HCT116 (cell line): ENCODE measurements at regions of chr11 and their contacts with region 1.

Region 1: DNA sequence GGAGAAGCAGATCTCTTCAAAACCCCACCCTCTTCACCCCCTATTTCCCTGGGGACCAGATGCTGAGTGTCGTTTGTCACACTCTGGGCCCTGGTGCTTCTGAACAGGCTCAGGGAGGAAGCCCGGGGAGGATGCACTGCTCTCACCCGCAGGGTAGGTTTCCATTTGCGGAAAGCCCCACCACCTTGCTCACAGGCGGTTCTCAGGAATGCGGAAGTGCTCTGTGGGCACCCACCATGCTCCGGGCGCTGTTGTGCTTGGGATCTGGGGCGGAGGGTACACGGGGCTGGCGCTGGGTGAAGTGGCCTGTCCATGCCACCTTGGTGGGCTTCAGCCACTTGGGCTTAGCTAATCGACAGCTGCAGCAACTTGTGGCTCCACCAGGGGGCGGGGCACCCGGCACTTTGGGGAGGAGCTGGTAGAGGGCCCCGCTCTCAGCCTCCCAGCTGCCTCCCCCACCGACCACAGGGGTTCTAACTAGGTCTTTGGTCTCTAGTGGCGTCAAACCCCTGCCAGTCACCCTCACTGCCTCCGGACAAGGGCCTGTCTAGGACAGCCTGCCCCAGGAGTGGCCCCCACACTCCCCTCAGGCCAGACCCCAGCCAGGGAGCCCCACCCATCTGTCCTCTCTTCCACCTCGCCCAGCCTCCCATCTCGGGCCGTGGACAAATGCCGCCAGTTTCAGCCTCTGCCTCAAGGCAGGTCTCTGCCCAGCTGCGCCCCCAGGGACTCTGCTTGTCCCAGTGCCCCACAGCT is 7.4 kb downstream of the NDUFV1 start:
- DNase-seq: peak; percentile 15
- ATAC-seq: peak; percentile 66
- H3K4me3 ChIP-seq: no peak overlapping the region
- H3K27ac ChIP-seq: peak overlapping the region; percentile 47
- H3K4me1 ChIP-seq: peaks cover 2 to 13% of the 10 kb centered on the region in 2 experiments; a peak in 2 of 4 replicates
- H3K27me3 ChIP-seq: no peaks in the 10 kb centered on the region
- CTCF ChIP-seq: peak; percentile 48 to 85 (median 72); a peak in 5 of 6 replicates
- POLR2A ChIP-seq: no peak
- RAD21 ChIP-seq: no peak

Region 2: GRCh38 chr11:66727282-66727882 is 886.8 kb before region 1 on chr11:
- CTCF ChIA-PET with region 1: no interaction called
- POLR2A ChIA-PET with region 1: no interaction called
- RAD21 ChIA-PET with region 1: no interaction called
- intact Hi-C with region 1: no loop called
- DNase-seq: no peak
- ATAC-seq: peak; percentile 75
- H3K4me3 ChIP-seq: peak overlapping the region; percentile 55 to 62
- H3K27ac ChIP-seq: peak overlapping the region; percentile 46; the same call in 1 of the 2 replicates
- H3K4me1 ChIP-seq: peaks cover 4 to 27% of the 10 kb centered on the region in 2 experiments; a peak in 3 of 4 replicates
- H3K27me3 ChIP-seq: peaks cover 7% of the 10 kb centered on the region; the same call in 1 of the 2 replicates
- CTCF ChIP-seq: no peak
- POLR2A ChIP-seq: peak; percentile 17
- RAD21 ChIP-seq: no peak

Region 3: GRCh38 chr11:67572747-67573419 is 41.3 kb before region 1 on chr11:
- CTCF ChIA-PET with region 1: interaction called, 11 read pairs
- POLR2A ChIA-PET with region 1: no interaction called
- RAD21 ChIA-PET with region 1: interaction called in 1 of 2 experiments, 3 read pairs
- intact Hi-C with region 1: no loop called
- DNase-seq: peak; percentile 65
- ATAC-seq: peak; percentile 91
- H3K4me3 ChIP-seq: no peak overlapping the region
- H3K27ac ChIP-seq: no peak overlapping the region
- H3K4me1 ChIP-seq: peaks cover 0 to 3% of the 10 kb centered on the region in 2 experiments; a peak in 1 of 4 replicates
- H3K27me3 ChIP-seq: no peaks in the 10 kb centered on the region
- CTCF ChIP-seq: peak; percentile 62 to 90 (median 84)
- POLR2A ChIP-seq: no peak
- RAD21 ChIP-seq: peak; percentile 87

Region 4: DNA sequence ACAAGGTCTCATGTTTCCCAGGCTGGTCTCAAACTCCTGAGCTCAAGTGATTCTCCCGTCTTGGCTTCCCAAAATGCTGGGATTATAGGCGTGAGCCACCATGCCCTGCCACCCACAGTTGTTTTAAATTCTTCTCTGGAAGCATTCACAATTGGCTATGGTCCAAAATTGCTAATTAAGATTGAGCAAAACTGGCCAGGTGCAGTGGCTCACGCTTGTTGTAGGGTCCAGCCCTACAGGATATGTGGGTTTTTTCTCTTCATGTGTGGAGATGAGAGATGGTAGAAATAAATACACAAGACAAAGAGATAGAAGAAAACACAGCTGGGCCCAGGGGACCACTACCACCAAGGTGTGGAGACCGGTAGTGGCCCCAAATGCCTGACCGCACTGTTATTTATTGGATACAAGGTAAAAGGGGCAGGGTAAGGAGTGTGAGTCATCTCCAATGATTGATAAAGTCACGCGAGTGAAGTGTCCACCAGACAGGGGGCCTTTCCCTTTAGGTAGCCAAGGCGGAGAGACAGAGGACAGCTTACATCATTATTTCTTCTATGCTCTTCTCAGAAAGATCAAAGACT is 44.6 kb after region 1 on chr11:
- CTCF ChIA-PET with region 1: interaction called, 14 read pairs
- POLR2A ChIA-PET with region 1: no interaction called
- RAD21 ChIA-PET with region 1: interaction called in 1 of 2 experiments, 3 read pairs
- intact Hi-C with region 1: loop called (anchors 1 kb)
- DNase-seq: no peak
- ATAC-seq: no peak
- H3K4me3 ChIP-seq: no peak overlapping the region
- H3K27ac ChIP-seq: no peak overlapping the region
- H3K4me1 ChIP-seq: no peaks in the 10 kb centered on the region
- H3K27me3 ChIP-seq: no peaks in the 10 kb centered on the region
- CTCF ChIP-seq: no peak
- POLR2A ChIP-seq: no peak
- RAD21 ChIP-seq: no peak

Region 5: DNA sequence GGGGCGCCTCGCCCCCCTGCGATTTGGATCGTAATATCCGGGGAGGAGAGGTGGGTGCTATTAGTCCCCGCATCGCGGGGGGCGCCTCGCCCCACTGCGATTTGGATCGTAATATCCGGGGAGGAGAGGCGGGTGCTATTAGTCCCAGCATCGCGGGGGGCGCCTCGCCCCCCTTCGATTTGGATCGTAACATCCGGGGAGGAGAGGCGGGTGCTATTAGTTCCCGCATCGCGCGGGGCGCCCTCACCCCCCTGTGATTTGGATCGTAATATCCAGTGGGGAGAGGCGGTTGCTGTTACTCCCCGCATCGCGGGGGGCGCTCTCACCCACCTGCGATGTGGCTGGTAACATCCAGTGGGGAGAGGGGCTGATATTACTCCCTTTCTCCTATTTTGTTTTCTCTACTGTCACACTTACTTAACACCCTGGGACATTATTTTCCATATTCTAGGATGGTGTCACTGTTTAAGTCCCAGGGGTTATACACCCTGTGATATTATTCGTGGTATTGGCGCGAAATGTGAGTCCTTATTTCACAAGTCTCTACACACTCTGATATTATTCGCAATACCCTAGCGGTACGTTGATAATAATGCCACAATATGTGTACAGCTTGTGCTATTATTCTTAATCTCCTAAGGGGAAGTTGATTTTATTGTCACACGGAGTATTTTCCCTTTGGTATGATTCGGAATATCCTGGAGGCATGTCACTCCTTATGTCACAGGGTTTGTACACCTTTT is 118.1 kb after region 1 on chr11:
- CTCF ChIA-PET with region 1: no interaction called
- POLR2A ChIA-PET with region 1: no interaction called
- RAD21 ChIA-PET with region 1: no interaction called
- intact Hi-C with region 1: no loop called
- DNase-seq: peak; percentile 4
- ATAC-seq: peak; percentile 91
- H3K4me3 ChIP-seq: peak overlapping the region; percentile 24 to 44
- H3K27ac ChIP-seq: no peak overlapping the region
- H3K4me1 ChIP-seq: no peaks in the 10 kb centered on the region; a peak in 1 of 4 replicates
- H3K27me3 ChIP-seq: no peaks in the 10 kb centered on the region
- CTCF ChIP-seq: peak; percentile 27 to 51 (median 37); a peak in 4 of 6 replicates
- POLR2A ChIP-seq: no peak
- RAD21 ChIP-seq: no peak